GM12878 (cell line): ENCODE measurements at regions of chr12 and their contacts with region 1.

Region 1: GRCh38 chr12:46217541-46218321 is 51.1 kb downstream of the SLC38A1 start:
- DNase-seq: peak; percentile 90
- ATAC-seq: peak; percentile 71
- H3K4me3 ChIP-seq: peak overlapping the region; percentile 44; the same call in 1 of the 2 replicates
- H3K27ac ChIP-seq: peak overlapping the region; percentile 87
- H3K4me1 ChIP-seq: peaks cover 62% of the 10 kb centered on the region
- H3K27me3 ChIP-seq: no peaks in the 10 kb centered on the region
- CTCF ChIP-seq: no peak
- EP300 ChIP-seq: peak; percentile 95 to 97
- POLR2A ChIP-seq: no peak
- RAD21 ChIP-seq: no peak

Region 2: DNA sequence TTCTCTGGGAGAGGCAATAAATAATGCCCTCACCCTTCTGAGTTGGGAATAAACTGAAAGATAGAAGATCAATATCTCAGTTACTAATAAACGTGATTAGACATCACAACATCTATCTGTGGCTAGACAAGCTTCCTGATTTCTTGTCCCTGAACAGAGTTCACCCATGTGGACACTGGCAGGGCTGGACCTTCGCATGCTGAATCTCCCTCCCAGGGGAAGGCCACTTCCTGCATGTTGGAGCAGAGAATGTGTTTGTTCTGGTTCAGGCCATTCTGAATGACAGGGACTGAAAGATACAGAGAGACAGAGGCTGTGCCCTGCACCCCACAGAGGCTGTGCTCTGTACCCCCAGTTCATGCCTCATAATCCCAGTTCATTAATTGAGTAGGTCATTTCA is 81.5 kb before region 1 on chr12:
- CTCF ChIA-PET with region 1: no interaction called
- POLR2A ChIA-PET with region 1: no interaction called
- RAD21 ChIA-PET with region 1: no interaction called
- SMC1A ChIA-PET with region 1: no interaction called
- in situ Hi-C with region 1: no loop called
- intact Hi-C with region 1: no loop called
- DNase-seq: no peak
- ATAC-seq: no peak
- H3K4me3 ChIP-seq: no peak overlapping the region
- H3K27ac ChIP-seq: no peak overlapping the region
- H3K4me1 ChIP-seq: no peaks in the 10 kb centered on the region
- H3K27me3 ChIP-seq: no peaks in the 10 kb centered on the region
- CTCF ChIP-seq: no peak
- EP300 ChIP-seq: no peak
- POLR2A ChIP-seq: no peak
- RAD21 ChIP-seq: no peak

Region 3: DNA sequence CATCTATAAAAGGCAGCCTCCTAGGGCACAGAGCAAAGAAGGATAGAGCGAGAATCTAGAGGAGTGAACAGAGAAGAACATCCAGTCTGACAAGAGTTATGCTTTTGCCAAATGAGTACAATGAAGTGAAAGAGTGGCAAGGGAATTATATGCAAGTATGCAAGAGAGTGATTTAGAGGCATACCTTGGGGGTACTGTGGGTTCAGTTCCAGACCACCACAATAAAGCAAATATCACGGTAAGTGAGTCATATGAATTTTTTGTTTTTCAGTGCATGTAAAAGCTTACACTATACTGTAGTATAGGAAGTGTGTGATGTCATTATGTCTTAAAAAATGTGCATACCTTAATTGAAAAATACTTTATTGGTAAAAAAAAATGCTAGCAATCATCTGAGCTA is 50.3 kb before region 1 on chr12:
- CTCF ChIA-PET with region 1: no interaction called
- POLR2A ChIA-PET with region 1: interaction called, 3 read pairs
- RAD21 ChIA-PET with region 1: interaction called, 6 read pairs
- SMC1A ChIA-PET with region 1: interaction called, 35 read pairs
- in situ Hi-C with region 1: no loop called
- intact Hi-C with region 1: no loop called
- DNase-seq: no peak
- ATAC-seq: no peak
- H3K4me3 ChIP-seq: no peak overlapping the region
- H3K27ac ChIP-seq: no peak overlapping the region
- H3K4me1 ChIP-seq: no peaks in the 10 kb centered on the region
- H3K27me3 ChIP-seq: no peaks in the 10 kb centered on the region
- CTCF ChIP-seq: no peak
- EP300 ChIP-seq: no peak
- POLR2A ChIP-seq: no peak
- RAD21 ChIP-seq: no peak

Region 4: DNA sequence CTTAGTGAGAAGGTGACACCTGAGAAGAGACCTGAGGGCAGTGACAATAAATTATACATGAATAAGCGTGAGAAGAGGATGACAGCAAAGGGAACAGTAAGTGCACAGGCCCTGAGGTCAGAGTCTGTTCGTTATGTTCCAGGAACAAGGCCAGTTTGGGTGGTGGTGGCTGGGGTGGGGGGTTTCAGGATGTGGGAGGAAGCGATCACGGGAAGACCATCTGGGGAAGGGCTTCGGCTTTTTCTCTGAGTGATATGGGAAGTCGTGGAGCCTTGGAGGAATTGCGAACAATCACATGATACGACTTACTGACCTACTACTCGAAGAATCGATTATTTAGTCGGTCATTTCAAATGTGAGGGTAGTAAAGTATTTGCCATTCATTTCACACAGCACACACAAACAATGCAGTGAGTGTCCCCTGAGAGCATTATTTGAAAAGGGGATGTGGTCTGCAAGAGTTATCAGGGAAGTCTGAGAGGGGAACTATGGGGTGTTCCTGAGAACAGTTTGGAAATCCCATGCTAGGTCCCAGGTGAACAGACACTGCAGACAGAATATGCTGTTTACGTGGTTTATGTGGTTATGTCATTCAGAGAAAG is 43.6 kb before region 1 on chr12:
- CTCF ChIA-PET with region 1: interaction called, 8 read pairs
- POLR2A ChIA-PET with region 1: interaction called, 95 read pairs
- RAD21 ChIA-PET with region 1: interaction called, 72 read pairs
- SMC1A ChIA-PET with region 1: interaction called, 81 read pairs
- in situ Hi-C with region 1: no loop called
- intact Hi-C with region 1: no loop called
- DNase-seq: peak; percentile 85
- ATAC-seq: peak; percentile 57
- H3K4me3 ChIP-seq: no peak overlapping the region; the same call in 1 of the 2 replicates
- H3K27ac ChIP-seq: peak overlapping the region; percentile 21
- H3K4me1 ChIP-seq: peaks cover 25% of the 10 kb centered on the region
- H3K27me3 ChIP-seq: no peaks in the 10 kb centered on the region
- CTCF ChIP-seq: no peak
- EP300 ChIP-seq: peak in 1 of 2 experiments; percentile 76; a peak in 2 of 4 replicates
- POLR2A ChIP-seq: no peak
- RAD21 ChIP-seq: no peak

Region 5: DNA sequence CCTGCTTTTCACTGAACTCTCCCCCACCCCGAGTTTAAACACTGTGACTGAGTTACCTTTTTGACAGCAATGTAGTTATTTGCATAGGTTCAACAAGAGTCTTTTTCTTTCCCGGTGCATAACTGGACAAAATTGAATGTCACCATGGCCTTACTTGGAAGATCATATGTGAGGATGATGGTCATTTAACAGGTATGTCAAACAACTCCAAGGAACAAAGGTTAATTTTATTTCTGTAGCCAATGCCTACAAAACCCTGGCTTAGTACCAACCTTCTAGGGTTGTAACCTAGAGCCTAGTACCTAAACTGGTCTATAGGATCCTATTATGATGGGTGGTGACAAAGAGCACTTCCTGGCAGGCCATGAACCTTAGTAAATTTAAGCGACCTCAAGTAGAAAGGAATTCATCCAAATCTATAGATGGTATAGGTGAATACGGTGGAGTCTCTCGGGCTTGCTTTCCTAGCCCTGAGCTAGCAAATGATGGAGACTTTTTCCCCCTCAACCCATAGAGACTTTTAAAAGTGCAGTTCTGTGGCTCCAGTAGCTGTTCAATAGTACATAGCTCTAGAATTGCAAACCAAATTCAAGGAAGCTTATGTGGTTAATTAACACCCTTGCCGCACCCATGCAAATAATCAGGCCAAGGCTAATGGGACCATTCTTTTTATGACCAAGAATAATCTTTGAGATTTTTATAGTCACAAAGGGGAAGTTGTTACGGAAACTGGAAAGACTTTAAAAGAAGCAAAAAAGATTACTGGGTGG is 37.9 kb before region 1 on chr12:
- CTCF ChIA-PET with region 1: interaction called, 9 read pairs
- POLR2A ChIA-PET with region 1: interaction called, 95 read pairs
- RAD21 ChIA-PET with region 1: interaction called, 72 read pairs
- SMC1A ChIA-PET with region 1: interaction called, 81 read pairs
- in situ Hi-C with region 1: no loop called
- intact Hi-C with region 1: no loop called
- DNase-seq: peak; percentile 76
- ATAC-seq: peak; percentile 70
- H3K4me3 ChIP-seq: no peak overlapping the region
- H3K27ac ChIP-seq: peak overlapping the region; percentile 47
- H3K4me1 ChIP-seq: peaks cover 34% of the 10 kb centered on the region
- H3K27me3 ChIP-seq: no peaks in the 10 kb centered on the region
- CTCF ChIP-seq: no peak
- EP300 ChIP-seq: peak; percentile 78 to 85; a peak in 3 of 4 replicates
- POLR2A ChIP-seq: no peak
- RAD21 ChIP-seq: no peak

Region 6: GRCh38 chr12:46198913-46199312 is 18.8 kb before region 1 on chr12:
- CTCF ChIA-PET with region 1: interaction called, 3 read pairs
- POLR2A ChIA-PET with region 1: no interaction called
- RAD21 ChIA-PET with region 1: interaction called, 22 read pairs
- SMC1A ChIA-PET with region 1: interaction called, 117 read pairs
- in situ Hi-C with region 1: no loop called
- intact Hi-C with region 1: no loop called
- DNase-seq: no peak
- ATAC-seq: no peak
- H3K4me3 ChIP-seq: no peak overlapping the region
- H3K27ac ChIP-seq: no peak overlapping the region
- H3K4me1 ChIP-seq: no peaks in the 10 kb centered on the region
- H3K27me3 ChIP-seq: no peaks in the 10 kb centered on the region
- CTCF ChIP-seq: no peak
- EP300 ChIP-seq: no peak
- POLR2A ChIP-seq: no peak
- RAD21 ChIP-seq: no peak

Region 7: GRCh38 chr12:46233423-46233822 is 15.7 kb after region 1 on chr12:
- CTCF ChIA-PET with region 1: interaction called, 4 read pairs
- POLR2A ChIA-PET with region 1: interaction called, 5 read pairs
- RAD21 ChIA-PET with region 1: interaction called, 3 read pairs
- SMC1A ChIA-PET with region 1: interaction called, 12 read pairs
- in situ Hi-C with region 1: no loop called
- intact Hi-C with region 1: no loop called
- DNase-seq: no peak
- ATAC-seq: peak; percentile 36; the same call in 2 of the 3 replicates
- H3K4me3 ChIP-seq: no peak overlapping the region
- H3K27ac ChIP-seq: no peak overlapping the region
- H3K4me1 ChIP-seq: no peaks in the 10 kb centered on the region
- H3K27me3 ChIP-seq: no peaks in the 10 kb centered on the region
- CTCF ChIP-seq: no peak
- EP300 ChIP-seq: no peak
- POLR2A ChIP-seq: no peak
- RAD21 ChIP-seq: no peak

Region 8: DNA sequence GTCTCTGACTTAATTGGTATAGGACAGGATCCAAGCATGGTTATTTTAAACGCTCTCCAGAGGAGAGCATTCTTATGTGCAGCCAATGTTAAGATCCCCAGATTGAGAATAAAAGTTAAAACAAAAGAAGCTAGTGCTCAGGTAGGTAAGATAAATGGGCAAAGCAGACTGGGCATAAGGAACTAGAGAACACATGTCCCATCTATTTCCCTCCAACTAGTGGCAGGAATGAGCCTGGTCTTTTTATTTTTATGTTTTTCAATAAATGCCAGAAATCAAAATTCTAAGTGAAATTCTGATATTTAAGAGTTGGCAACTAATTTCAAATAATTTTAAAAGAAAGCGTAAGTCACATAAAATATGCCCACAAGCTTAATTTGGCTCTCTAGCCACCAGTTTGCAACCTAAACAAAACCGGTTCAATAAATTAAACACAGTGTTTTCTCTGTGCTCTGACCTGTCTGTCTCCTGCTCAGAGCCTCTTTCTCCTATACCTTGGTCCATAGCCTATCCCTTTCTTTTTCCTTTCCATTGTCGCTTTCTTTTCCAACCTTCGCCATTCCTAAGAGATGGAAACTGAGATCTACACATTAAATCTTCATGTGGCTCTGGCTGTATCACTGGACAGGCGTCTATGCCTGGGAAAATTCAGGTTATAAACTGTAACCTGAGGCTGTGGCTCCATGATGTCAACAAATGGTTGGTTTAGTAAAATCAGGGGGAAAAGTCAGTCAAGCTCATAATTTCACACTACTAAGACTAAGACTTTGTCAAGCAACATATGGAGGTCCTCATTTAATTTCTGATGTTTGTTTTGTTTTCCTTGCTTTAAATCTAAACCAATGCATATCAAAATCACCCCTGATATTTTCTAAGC is 45.6 kb after region 1 on chr12:
- CTCF ChIA-PET with region 1: interaction called, 14 read pairs
- POLR2A ChIA-PET with region 1: interaction called, 30 read pairs
- RAD21 ChIA-PET with region 1: interaction called, 60 read pairs
- SMC1A ChIA-PET with region 1: interaction called, 95 read pairs
- in situ Hi-C with region 1: no loop called
- intact Hi-C with region 1: loop called (anchors 2 kb)
- DNase-seq: no peak
- ATAC-seq: no peak
- H3K4me3 ChIP-seq: peak overlapping the region; percentile 11
- H3K27ac ChIP-seq: peak overlapping the region; percentile 35
- H3K4me1 ChIP-seq: peaks cover 12% of the 10 kb centered on the region; the same call in 1 of the 2 replicates
- H3K27me3 ChIP-seq: no peaks in the 10 kb centered on the region
- CTCF ChIP-seq: no peak
- EP300 ChIP-seq: no peak
- POLR2A ChIP-seq: no peak
- RAD21 ChIP-seq: no peak

Region 9: GRCh38 chr12:46377678-46378077 is 159.9 kb after region 1 on chr12:
- CTCF ChIA-PET with region 1: no interaction called
- POLR2A ChIA-PET with region 1: no interaction called
- RAD21 ChIA-PET with region 1: no interaction called
- SMC1A ChIA-PET with region 1: no interaction called
- in situ Hi-C with region 1: no loop called
- intact Hi-C with region 1: no loop called
- DNase-seq: no peak
- ATAC-seq: no peak
- H3K4me3 ChIP-seq: no peak overlapping the region
- H3K27ac ChIP-seq: no peak overlapping the region
- H3K4me1 ChIP-seq: peaks cover 6% of the 10 kb centered on the region
- H3K27me3 ChIP-seq: no peaks in the 10 kb centered on the region
- CTCF ChIP-seq: no peak
- EP300 ChIP-seq: no peak
- POLR2A ChIP-seq: no peak
- RAD21 ChIP-seq: no peak